ENCODE measurements at regions of chr18 and their contacts with region 1.

Region 1: DNA sequence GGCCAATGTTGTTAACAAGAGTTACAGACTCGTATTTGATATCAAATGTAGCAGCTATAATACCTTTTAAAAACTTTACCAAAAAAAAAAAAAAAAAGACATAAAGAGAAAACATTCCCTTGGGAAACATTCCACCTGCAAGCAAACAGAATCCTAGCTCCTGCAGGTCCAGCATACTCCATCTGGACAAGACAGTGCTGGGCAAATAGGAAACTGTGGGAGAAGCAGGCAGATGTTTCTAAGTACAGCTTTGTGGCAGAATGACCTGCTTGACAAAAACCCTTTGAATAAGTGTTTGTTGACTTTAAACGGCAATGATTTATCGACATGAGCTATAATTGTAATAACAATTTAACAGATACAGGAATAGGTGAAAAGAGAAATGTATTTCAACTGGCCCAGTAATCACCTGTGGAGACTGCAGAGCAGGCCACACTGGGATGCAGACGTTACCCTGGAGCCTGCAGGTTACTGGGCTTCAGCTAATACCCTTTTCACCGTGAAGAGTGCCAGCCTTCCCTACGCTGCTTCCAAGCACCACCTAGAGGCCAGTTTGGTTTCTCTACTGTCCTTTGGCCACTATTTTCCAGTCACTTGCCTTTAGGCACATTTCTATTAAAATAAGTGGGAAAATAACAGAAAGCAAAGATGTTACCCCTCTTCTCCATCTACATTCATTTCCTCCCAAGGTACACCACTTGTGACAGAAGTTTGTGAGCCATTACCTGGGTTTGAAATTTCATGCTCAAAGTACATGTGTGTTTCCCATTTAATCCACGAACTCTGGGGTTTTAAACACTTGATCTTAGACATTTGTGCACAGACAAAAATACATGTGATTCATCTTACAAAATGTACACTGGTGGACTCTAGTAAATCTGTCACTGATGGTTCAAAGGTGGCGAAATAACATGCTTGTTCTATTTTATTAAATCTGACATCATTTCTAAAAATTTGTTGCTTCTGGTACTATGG is 96.9 kb upstream of the ZNF397 start:
- DNase-seq: peak; percentile 19 to 56
- ATAC-seq: peak; percentile 81 to 93; a peak in 5 of 6 replicates
- H3K4me3 ChIP-seq: no peak overlapping the region
- H3K27ac ChIP-seq: no peak overlapping the region
- H3K4me1 ChIP-seq: no peaks in the 10 kb centered on the region
- CTCF ChIP-seq: peak; percentile 67
- EP300 ChIP-seq: no peak
- POLR2A ChIP-seq: no peak
- RAD21 ChIP-seq: peak; percentile 78 to 79

Region 2: GRCh38 chr18:34880882-34881834 is 262.8 kb before region 1 on chr18:
- CTCF ChIA-PET with region 1: interaction called, 17 read pairs
- POLR2A ChIA-PET with region 1: no interaction called
- DNase-seq: peak in 1 of 2 experiments; percentile 41
- ATAC-seq: peak in 1 of 2 experiments; percentile 38; a peak in 1 of 6 replicates
- H3K4me3 ChIP-seq: no peak overlapping the region
- H3K27ac ChIP-seq: no peak overlapping the region
- H3K4me1 ChIP-seq: 0 out of 3 replicates have a peak, but pooled peaks cover 2% of the 10 kb centered on the region
- CTCF ChIP-seq: peak; percentile 51
- EP300 ChIP-seq: no peak
- POLR2A ChIP-seq: no peak
- RAD21 ChIP-seq: peak; percentile 65 to 67

Region 3: GRCh38 chr18:35005963-35006577 is 137.8 kb before region 1 on chr18:
- CTCF ChIA-PET with region 1: interaction called, 10 read pairs
- POLR2A ChIA-PET with region 1: no interaction called
- DNase-seq: peak; percentile 42 to 61
- ATAC-seq: peak; percentile 81 to 91; a peak in 5 of 6 replicates
- H3K4me3 ChIP-seq: no peak overlapping the region
- H3K27ac ChIP-seq: no peak overlapping the region
- H3K4me1 ChIP-seq: no peaks in the 10 kb centered on the region
- CTCF ChIP-seq: peak; percentile 66
- EP300 ChIP-seq: no peak
- POLR2A ChIP-seq: no peak
- RAD21 ChIP-seq: peak; percentile 75

Region 4: DNA sequence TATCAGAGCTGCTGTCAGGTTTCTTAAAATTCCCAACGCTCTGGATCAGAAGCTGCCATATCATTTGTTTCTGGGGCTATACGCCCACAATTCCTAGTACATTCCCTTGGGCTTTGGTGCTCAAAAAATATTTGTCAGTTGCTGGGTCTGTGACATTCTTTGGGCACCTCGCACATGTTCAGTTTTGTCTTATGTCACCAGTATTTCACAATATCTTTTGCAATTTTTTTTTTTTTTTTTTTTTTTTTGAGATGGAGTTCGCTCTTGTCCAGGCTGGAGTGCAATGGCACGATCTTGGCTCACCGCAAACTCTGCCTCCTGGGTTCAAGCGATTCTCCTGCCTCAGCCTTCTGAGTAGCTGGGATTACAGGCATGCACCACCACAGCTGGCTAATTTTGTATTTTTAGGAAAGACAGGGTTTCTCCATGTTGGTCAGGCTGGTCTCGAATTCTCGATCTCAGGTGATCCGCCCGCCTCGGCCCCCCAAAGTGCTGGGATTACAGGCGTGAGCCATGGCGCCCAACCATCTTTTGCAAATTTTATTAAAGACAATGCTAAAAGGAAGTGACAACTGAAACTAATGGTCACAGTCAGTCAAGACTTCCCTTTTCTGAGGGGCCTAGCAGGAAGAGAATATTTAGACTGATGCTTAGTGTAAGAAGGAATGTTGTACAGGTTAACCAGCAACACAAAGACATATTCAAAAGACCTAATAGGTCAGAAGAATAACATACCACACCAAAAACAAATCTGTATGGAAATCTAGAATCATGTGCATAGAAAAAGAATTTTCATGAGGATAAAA is 103.7 kb after region 1 on chr18:
- CTCF ChIA-PET with region 1: no interaction called
- POLR2A ChIA-PET with region 1: no interaction called
- DNase-seq: no peak
- ATAC-seq: no peak
- H3K4me3 ChIP-seq: no peak overlapping the region
- H3K27ac ChIP-seq: no peak overlapping the region
- H3K4me1 ChIP-seq: no peaks in the 10 kb centered on the region
- CTCF ChIP-seq: no peak
- EP300 ChIP-seq: no peak
- POLR2A ChIP-seq: no peak
- RAD21 ChIP-seq: no peak

Region 5: DNA sequence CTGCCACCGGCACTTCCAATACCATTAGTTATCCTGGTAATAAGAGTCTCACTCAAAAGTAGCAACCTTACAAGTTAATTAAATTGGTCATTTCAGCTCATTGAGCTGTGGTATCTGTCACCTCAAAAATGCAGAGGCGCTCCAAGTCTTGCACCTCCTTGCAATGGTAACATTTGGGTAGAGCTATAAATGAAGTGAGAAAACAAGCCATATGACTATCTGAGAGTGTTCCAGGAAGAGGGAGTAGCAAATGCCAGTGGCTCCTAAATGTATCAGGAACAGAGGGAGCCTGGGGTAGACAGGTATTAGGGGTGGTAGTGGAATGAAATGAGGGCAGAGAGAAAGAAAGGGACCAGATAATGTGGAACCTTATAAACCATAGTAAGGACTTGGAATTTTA is 152.2 kb after region 1 on chr18:
- CTCF ChIA-PET with region 1: no interaction called
- POLR2A ChIA-PET with region 1: no interaction called
- DNase-seq: no peak
- ATAC-seq: no peak
- H3K4me3 ChIP-seq: no peak overlapping the region
- H3K27ac ChIP-seq: no peak overlapping the region
- H3K4me1 ChIP-seq: 0 out of 3 replicates have a peak, but pooled peaks cover 2% of the 10 kb centered on the region
- CTCF ChIP-seq: no peak
- EP300 ChIP-seq: no peak
- POLR2A ChIP-seq: no peak
- RAD21 ChIP-seq: no peak

Measured in A549 (cell line).